ENCODE measurements at regions of chr1 and their contacts with region 1.

Region 1: GRCh38 chr1:93324486-93325464 is 20.9 kb upstream of the DR1 start:
- DNase-seq: peak; percentile 50 to 54
- ATAC-seq: peak; percentile 76 to 89; a peak in 5 of 6 replicates
- H3K4me3 ChIP-seq: no peak overlapping the region
- H3K27ac ChIP-seq: peak overlapping the region; percentile 53 to 66
- H3K4me1 ChIP-seq: peaks cover 22% of the 10 kb centered on the region
- CTCF ChIP-seq: no peak
- EP300 ChIP-seq: no peak
- POLR2A ChIP-seq: no peak
- RAD21 ChIP-seq: no peak

Region 2: GRCh38 chr1:93186667-93187066 is 138.1 kb before region 1 on chr1:
- CTCF ChIA-PET with region 1: no interaction called
- POLR2A ChIA-PET with region 1: no interaction called
- DNase-seq: no peak
- ATAC-seq: no peak
- H3K4me3 ChIP-seq: no peak overlapping the region
- H3K27ac ChIP-seq: no peak overlapping the region
- H3K4me1 ChIP-seq: peaks cover 16% of the 10 kb centered on the region; the same call in 2 of the 3 replicates
- CTCF ChIP-seq: no peak
- EP300 ChIP-seq: no peak
- POLR2A ChIP-seq: no peak
- RAD21 ChIP-seq: no peak

Region 3: DNA sequence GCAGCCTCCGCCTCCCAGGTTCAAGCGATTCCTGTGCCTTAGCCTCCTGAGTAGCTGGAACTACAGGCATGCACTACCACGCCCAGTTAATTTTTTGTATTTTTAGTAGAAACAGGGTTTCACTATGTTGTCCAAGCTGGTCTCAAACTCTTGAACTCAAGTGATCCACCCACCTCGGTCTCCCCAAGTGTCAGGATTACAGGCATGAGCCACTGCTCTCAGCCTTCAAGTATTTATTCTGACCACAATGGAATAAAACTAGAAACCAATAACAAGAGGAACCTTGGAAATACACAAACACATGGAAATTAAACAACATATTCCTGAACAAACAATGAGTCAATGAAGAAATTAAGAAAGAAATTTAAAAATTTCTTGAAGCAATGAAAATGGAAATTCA is 11.7 kb before region 1 on chr1:
- CTCF ChIA-PET with region 1: no interaction called
- POLR2A ChIA-PET with region 1: no interaction called
- DNase-seq: no peak
- ATAC-seq: no peak
- H3K4me3 ChIP-seq: no peak overlapping the region
- H3K27ac ChIP-seq: no peak overlapping the region
- H3K4me1 ChIP-seq: no peaks in the 10 kb centered on the region
- CTCF ChIP-seq: no peak
- EP300 ChIP-seq: no peak
- POLR2A ChIP-seq: no peak
- RAD21 ChIP-seq: no peak

Region 4: GRCh38 chr1:93345633-93346420 is 21.1 kb after region 1 on chr1 and contains the start of gene DR1:
- CTCF ChIA-PET with region 1: interaction called, 9 read pairs
- POLR2A ChIA-PET with region 1: interaction called, 12 read pairs
- DNase-seq: peak; percentile 80 to 88
- ATAC-seq: peak; percentile 92 to 95
- H3K4me3 ChIP-seq: peak within 1 kb of the TSS; percentile 86
- H3K27ac ChIP-seq: peak within 1 kb of the TSS; percentile 98 to 99
- H3K4me1 ChIP-seq: peaks cover 28% of the 10 kb centered on the region; the same call in 2 of the 3 replicates
- CTCF ChIP-seq: no peak
- EP300 ChIP-seq: no peak
- POLR2A ChIP-seq: peak; percentile 61
- RAD21 ChIP-seq: no peak
- polyA plus RNA-seq, gene DR1: 30.8 and 39.8 TPM in 2 replicates

Region 5: GRCh38 chr1:93374334-93375106 is 49.7 kb after region 1 on chr1:
- CTCF ChIA-PET with region 1: no interaction called
- POLR2A ChIA-PET with region 1: no interaction called
- DNase-seq: no peak
- ATAC-seq: no peak
- H3K4me3 ChIP-seq: no peak overlapping the region
- H3K27ac ChIP-seq: no peak overlapping the region
- H3K4me1 ChIP-seq: no peaks in the 10 kb centered on the region
- CTCF ChIP-seq: no peak
- EP300 ChIP-seq: no peak
- POLR2A ChIP-seq: no peak
- RAD21 ChIP-seq: no peak

Measured in A549 (cell line).